Mammary epithelial cell (primary cell): ENCODE measurements at regions of chr1 and their contacts with region 1.

Region 1: GRCh38 chr1:248858891-248859889 is at the start of gene ZNF692:
- DNase-seq: peak; percentile 93
- H3K4me3 ChIP-seq: peak within 1 kb of the TSS; percentile 58 to 67 (median 61)
- H3K27ac ChIP-seq: peak within 1 kb of the TSS; percentile 54
- H3K4me1 ChIP-seq: peaks cover 31% of the 10 kb centered on the region
- H3K27me3 ChIP-seq: no peaks in the 10 kb centered on the region
- CTCF ChIP-seq: no peak
- total RNA-seq, gene ZNF692: 9.0 to 39.9 TPM

Region 2: GRCh38 chr1:248416226-248416625 is 443.0 kb before region 1 on chr1:
- CTCF ChIA-PET with region 1: no interaction called
- dilution Hi-C with region 1: no loop called
- in situ Hi-C with region 1: no loop called
- intact Hi-C with region 1: no loop called
- DNase-seq: no peak
- H3K4me3 ChIP-seq: no peak overlapping the region
- H3K27ac ChIP-seq: no peak overlapping the region
- H3K4me1 ChIP-seq: no peaks in the 10 kb centered on the region
- H3K27me3 ChIP-seq: no peaks in the 10 kb centered on the region
- CTCF ChIP-seq: no peak

Region 3: GRCh38 chr1:248825909-248826760 is 33.1 kb before region 1 on chr1 and contains the start of gene SH3BP5L:
- CTCF ChIA-PET with region 1: no interaction called
- dilution Hi-C with region 1: no loop called
- in situ Hi-C with region 1: no loop called
- intact Hi-C with region 1: loop called (anchors 1 kb)
- DNase-seq: peak; percentile 93
- H3K4me3 ChIP-seq: peak within 1 kb of the TSS; percentile 85 to 93 (median 87)
- H3K27ac ChIP-seq: peak within 1 kb of the TSS; percentile 96
- H3K4me1 ChIP-seq: peaks cover 34% of the 10 kb centered on the region
- H3K27me3 ChIP-seq: no peaks in the 10 kb centered on the region
- CTCF ChIP-seq: peak; percentile 55 to 75
- total RNA-seq, gene SH3BP5L: 22.3 to 30.3 TPM

Region 4: DNA sequence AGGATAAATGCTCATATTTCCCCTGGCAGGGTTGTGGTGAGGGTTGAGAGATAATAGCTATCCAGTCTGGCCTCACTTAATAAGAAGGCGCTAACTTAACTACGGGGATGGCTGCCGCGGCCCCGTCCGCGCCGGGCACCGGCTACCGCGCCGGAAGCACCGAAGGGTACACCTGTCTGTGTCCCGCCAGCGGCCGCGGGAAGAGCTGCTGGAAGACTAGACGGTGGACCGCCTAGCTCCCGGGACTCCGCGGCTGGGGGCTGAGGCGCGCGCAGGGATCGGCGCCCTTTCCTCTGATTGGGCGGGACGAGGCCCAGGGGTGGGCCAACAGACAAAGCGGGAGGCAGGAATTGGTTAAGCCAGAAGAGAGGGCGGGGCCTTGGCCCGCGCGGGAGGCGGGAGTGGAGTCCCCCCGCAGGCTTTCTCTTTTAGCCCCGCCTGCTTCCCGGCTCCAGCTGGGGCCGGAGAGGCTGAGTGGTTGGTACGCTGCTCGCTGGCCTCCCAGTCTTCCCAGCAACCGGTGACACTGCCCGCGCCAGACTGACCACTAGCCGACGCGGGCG is 21.3 kb before region 1 on chr1 and contains the start of gene ZNF672:
- CTCF ChIA-PET with region 1: interaction called, 4 read pairs
- dilution Hi-C with region 1: no loop called
- in situ Hi-C with region 1: no loop called
- intact Hi-C with region 1: loop called (anchors 1 kb)
- DNase-seq: peak; percentile 97
- H3K4me3 ChIP-seq: peak within 1 kb of the TSS; percentile 76 to 94 (median 89)
- H3K27ac ChIP-seq: peak within 1 kb of the TSS; percentile 87
- H3K4me1 ChIP-seq: peaks cover 31% of the 10 kb centered on the region
- H3K27me3 ChIP-seq: no peaks in the 10 kb centered on the region
- CTCF ChIP-seq: no peak
- total RNA-seq, gene ZNF672: 20.5 to 22.5 TPM

Region 5: GRCh38 chr1:248873409-248873992 is 14.3 kb after region 1 on chr1:
- CTCF ChIA-PET with region 1: no interaction called
- dilution Hi-C with region 1: no loop called
- in situ Hi-C with region 1: no loop called
- intact Hi-C with region 1: loop called (anchors 1 kb)
- DNase-seq: peak; percentile 95
- H3K4me3 ChIP-seq: peak overlapping the region; percentile 66 to 83 (median 73)
- H3K27ac ChIP-seq: peak overlapping the region; percentile 75
- H3K4me1 ChIP-seq: peaks cover 3% of the 10 kb centered on the region
- H3K27me3 ChIP-seq: no peaks in the 10 kb centered on the region
- CTCF ChIP-seq: peak in 1 of 2 donors; percentile 14

Region 6: DNA sequence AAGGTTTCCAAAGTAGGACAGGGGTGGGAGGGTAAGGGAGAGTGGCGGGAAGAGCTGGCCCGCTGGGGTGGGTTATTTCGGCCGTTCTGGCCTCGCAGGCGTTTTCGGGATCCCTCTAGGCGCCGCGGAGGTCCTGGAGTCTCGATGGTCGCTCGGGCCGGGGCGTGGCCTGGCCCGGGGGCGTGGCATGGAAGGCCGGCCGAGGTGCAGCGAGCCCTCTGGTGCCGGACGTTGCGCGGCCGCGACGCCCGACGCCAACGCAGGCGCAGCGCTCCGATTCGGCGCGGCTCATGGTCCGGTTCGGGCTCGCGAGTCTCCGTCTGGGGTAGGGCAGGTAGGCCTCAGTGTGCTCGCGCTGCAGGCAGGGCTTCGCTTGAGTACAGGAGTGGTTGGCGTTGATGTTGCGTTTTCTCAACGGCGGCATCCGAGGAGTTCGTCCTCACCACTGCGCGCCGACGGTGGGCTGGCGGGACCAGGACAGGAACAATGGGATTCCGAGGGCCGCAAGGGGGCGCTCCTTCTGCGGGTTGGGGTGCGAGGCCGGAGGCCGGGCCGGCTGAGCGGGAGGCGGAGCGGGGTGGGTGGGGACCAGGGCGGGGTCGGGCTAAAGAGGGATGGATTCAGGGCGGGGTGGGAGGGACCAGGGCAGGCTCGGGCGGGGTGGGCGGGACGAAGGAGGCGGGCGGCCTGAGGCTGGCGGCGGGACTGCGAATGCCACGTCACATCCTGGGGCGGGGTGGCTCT is 47.0 kb after region 1 on chr1 and contains the start of gene PGBD2:
- CTCF ChIA-PET with region 1: interaction called, 5 read pairs
- dilution Hi-C with region 1: no loop called
- in situ Hi-C with region 1: no loop called
- intact Hi-C with region 1: loop called (anchors 1 kb)
- DNase-seq: peak; percentile 88
- H3K4me3 ChIP-seq: peak within 1 kb of the TSS; percentile 72 to 79 (median 79)
- H3K27ac ChIP-seq: peak within 1 kb of the TSS; percentile 79
- H3K4me1 ChIP-seq: peaks cover 7% of the 10 kb centered on the region
- H3K27me3 ChIP-seq: no peaks in the 10 kb centered on the region
- CTCF ChIP-seq: peak; percentile 55 to 71
- total RNA-seq, gene PGBD2: 3.8 to 4.2 TPM

Region 7: DNA sequence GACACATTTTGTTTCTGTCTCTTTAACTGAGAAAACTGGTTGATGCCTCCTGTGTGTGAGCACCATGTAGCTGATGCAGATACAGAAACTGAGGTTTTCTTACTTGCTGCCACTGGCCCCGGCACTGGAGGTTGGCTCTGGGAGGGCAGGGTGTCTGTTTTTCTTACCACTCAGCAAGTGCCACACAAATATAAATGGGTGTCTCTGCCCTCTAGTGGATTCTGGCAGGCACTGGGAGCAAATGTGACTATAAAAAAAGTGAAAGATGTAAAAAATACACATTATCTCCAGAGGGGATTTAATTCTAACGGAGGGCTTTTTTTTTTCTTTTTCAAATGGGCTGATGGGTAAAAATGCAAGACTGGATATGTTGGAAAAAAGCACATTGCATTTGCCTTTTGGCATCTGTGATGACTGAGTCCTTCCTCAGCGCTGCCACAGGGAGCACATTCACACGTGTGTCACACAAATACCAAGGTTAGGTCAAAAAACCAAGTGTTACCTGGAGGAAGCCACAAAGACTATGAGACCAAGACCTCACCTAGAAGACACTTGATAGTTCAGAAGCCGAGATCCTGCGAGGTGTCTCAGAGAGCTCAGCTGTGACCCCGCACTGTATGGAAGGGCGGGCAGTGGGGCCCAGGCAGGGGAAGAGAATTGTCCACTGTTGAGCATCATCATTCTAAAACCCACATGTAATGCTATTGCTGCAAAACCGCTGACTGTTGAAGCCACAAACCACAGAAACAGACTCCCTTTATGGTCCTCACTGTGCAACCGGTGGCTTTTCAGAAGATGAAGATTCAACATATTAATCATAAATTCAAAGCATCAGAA is 65.7 kb after region 1 on chr1:
- CTCF ChIA-PET with region 1: interaction called, 18 read pairs
- dilution Hi-C with region 1: no loop called
- in situ Hi-C with region 1: no loop called
- intact Hi-C with region 1: no loop called
- DNase-seq: peak; percentile 43
- H3K4me3 ChIP-seq: no peak overlapping the region
- H3K27ac ChIP-seq: no peak overlapping the region
- H3K4me1 ChIP-seq: peaks cover 4% of the 10 kb centered on the region
- H3K27me3 ChIP-seq: no peaks in the 10 kb centered on the region
- CTCF ChIP-seq: peak; percentile 64 to 72